ENCODE measurements at regions of chr16 and their contacts with region 1.

Region 1: GRCh38 chr16:21584817-21585216 is 14.6 kb upstream of the METTL9 start:
- DNase-seq: no peak
- H3K4me3 ChIP-seq: no peak overlapping the region
- H3K27ac ChIP-seq: no peak overlapping the region
- H3K4me1 ChIP-seq: peaks cover 0 to 12% (median 5%) of the 10 kb centered on the region in 4 donors
- H3K27me3 ChIP-seq: no peaks in the 10 kb centered on the region
- CTCF ChIP-seq: no peak
- EP300 ChIP-seq: no peak
- POLR2A ChIP-seq: no peak

Region 2: GRCh38 chr16:21644674-21645073 is 59.9 kb after region 1 on chr16:
- intact Hi-C with region 1: loop called (anchors 5 kb)
- DNase-seq: no peak
- H3K4me3 ChIP-seq: peak overlapping the region in 3 of 4 donors; percentile 35 to 47 (median 37)
- H3K27ac ChIP-seq: peak overlapping the region in 3 of 4 donors; percentile 24 to 56 (median 25)
- H3K4me1 ChIP-seq: peaks cover 19 to 41% (median 27%) of the 10 kb centered on the region in 4 donors
- H3K27me3 ChIP-seq: no peaks in the 10 kb centered on the region
- CTCF ChIP-seq: no peak
- EP300 ChIP-seq: no peak
- POLR2A ChIP-seq: no peak

Region 3: GRCh38 chr16:21656795-21657768 is 72.3 kb after region 1 on chr16:
- intact Hi-C with region 1: no loop called
- DNase-seq: no peak
- H3K4me3 ChIP-seq: no peak overlapping the region
- H3K27ac ChIP-seq: no peak overlapping the region
- H3K4me1 ChIP-seq: peaks cover 0 to 15% (median 8%) of the 10 kb centered on the region in 4 donors
- H3K27me3 ChIP-seq: no peaks in the 10 kb centered on the region
- CTCF ChIP-seq: peak; percentile 51 to 87 (median 76)
- EP300 ChIP-seq: no peak
- POLR2A ChIP-seq: no peak

Region 4: DNA sequence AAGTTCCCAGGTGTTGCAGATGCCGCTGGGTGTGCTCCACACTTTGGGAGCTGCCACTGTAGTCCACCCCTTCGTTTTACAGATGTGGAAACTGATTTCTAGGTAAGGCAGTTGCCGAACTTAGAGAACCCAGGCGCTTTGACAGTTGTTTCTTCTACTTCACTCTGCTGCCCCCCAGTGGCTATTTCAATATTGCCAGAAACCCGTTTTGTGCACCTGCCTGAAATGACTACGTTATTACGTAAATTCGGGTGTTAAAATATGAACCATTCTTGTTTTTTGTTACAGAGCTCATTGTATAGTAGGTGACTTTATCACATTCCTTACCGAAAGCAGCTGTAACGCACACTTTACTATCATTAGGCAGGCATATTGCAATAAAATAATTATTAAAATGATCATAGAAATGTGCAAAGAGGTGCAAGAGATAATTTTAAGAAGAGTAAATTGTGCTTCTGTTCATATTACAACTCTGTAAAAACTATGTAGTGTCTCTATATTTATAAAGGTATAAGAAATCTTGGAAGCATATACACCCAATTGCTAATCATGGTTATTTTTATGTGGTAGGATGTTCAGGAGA is 123.8 kb after region 1 on chr16:
- intact Hi-C with region 1: loop called (anchors 1 kb)
- DNase-seq: peak; percentile 95
- H3K4me3 ChIP-seq: no peak overlapping the region
- H3K27ac ChIP-seq: no peak overlapping the region
- H3K4me1 ChIP-seq: peaks cover 0 to 8% (median 6%) of the 10 kb centered on the region in 4 donors
- H3K27me3 ChIP-seq: peaks cover 0 to 6% (median 0%) of the 10 kb centered on the region in 4 donors
- CTCF ChIP-seq: peak; percentile 71 to 84 (median 77)
- EP300 ChIP-seq: no peak
- POLR2A ChIP-seq: no peak

Region 5: DNA sequence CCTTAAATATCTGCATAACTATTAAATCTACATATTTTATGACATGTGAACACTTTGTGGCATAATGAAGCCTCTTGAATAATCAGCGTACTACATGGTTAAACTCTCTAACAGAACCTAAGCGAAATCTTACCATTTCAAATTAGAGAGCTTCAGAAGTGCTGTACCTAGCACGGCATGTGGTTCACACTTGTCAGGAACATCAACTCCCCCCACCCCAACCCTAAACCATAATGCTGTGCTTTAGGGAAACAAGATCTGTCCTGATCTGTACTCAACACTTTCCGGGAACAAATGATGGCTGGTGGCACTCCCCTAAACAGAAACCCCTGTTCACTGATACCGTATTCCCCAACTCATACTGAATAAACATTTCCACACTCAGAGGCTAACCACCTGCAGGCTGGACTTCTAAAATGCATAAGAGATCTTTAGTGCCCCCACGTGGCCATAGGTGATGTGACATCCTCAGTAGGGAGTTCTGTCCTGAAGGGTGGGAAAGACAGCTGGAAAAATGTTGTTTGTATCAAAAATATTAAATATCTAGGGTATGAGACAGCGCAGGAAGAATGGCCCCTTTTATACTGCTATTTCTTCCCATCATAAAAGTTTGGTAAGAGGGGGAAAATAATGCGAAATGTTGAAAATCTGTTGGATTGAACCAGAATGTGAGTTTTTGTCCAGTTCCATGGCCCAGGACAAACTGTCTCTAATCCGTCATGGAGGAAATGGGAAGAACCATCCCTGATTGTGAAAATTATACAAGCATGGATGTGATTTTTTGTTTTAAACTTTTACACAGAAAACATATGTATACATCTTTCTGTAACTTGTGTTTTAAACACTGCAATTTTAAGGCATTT is 1475.9 kb after region 1 on chr16:
- intact Hi-C with region 1: no loop called
- DNase-seq: peak; percentile 93
- H3K4me3 ChIP-seq: no peak overlapping the region
- H3K27ac ChIP-seq: no peak overlapping the region
- H3K4me1 ChIP-seq: peaks cover 0 to 23% (median 15%) of the 10 kb centered on the region in 4 donors
- H3K27me3 ChIP-seq: no peaks in the 10 kb centered on the region
- CTCF ChIP-seq: peak; percentile 78 to 82 (median 80)
- EP300 ChIP-seq: no peak
- POLR2A ChIP-seq: no peak

Measured in esophagus muscularis mucosa (tissue), 4 donors.